CD4-positive, alpha-beta T cell (primary cell): ENCODE measurements at regions of chr22 and their contacts with region 1.

Region 1: GRCh38 chr22:42313804-42314581 is 43.5 kb upstream of the TCF20 start:
- DNase-seq: peak in 12 of 14 experiments; percentile 21 to 76 (median 48)
- ATAC-seq: peak; percentile 88
- H3K4me3 ChIP-seq: no peak overlapping the region
- H3K4me3 Mint-ChIP-seq: peak overlapping the region; percentile 54
- H3K27ac ChIP-seq: no peak overlapping the region
- H3K27ac Mint-ChIP-seq: peak overlapping the region; percentile 72
- H3K4me1 ChIP-seq: peaks cover 68% of the 10 kb centered on the region
- H3K4me1 Mint-ChIP-seq: peaks cover 59% of the 10 kb centered on the region
- H3K27me3 ChIP-seq: no peaks in the 10 kb centered on the region
- H3K27me3 Mint-ChIP-seq: no peaks in the 10 kb centered on the region
- CTCF ChIP-seq: peak; percentile 26

Region 2: DNA sequence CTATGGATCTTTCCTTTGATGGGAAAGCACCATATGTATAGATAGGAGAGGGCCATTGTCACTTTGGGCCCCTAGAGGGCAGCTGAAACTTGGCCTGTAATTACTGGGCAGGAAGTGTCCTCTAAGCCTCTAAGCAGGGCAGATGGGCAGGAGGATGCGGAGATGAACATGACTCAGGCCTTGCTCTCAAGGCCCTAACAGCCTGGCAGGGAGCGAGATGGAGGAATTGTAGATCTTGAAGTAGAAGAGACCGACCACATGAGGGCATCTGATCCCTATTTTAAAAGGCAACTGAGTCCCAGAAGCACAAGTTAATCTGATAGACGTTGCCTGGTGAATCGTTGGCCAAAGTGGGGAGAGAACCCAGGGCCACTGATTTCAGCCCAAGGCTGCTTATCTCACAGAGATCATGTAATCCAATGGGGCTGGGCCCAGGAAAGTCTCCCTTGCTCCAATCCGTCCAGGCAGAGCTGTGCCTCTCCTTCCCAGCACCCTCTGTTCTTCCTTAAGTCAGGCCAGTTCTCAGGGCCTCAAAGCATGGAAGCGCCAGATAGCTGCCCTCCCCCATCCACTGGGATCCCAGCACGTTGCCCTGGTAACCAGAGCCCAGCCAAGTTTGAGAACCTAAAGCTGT is 347.3 kb before region 1 on chr22:
- CTCF ChIA-PET with region 1: no interaction called
- POLR2A ChIA-PET with region 1: no interaction called
- intact Hi-C with region 1: loop called in 1 of 2 experiments (anchors 10 kb)
- DNase-seq: peak in 7 of 14 experiments; percentile 25 to 80 (median 49)
- ATAC-seq: peak; percentile 61
- H3K4me3 ChIP-seq: no peak overlapping the region
- H3K4me3 Mint-ChIP-seq: no peak overlapping the region
- H3K27ac ChIP-seq: no peak overlapping the region
- H3K27ac Mint-ChIP-seq: no peak overlapping the region
- H3K4me1 ChIP-seq: no peaks in the 10 kb centered on the region
- H3K4me1 Mint-ChIP-seq: no peaks in the 10 kb centered on the region
- H3K27me3 ChIP-seq: peaks cover under 1 to 8% of the 10 kb centered on the region in 2 experiments
- H3K27me3 Mint-ChIP-seq: peaks cover 6% of the 10 kb centered on the region
- CTCF ChIP-seq: peak; percentile 43

Region 3: DNA sequence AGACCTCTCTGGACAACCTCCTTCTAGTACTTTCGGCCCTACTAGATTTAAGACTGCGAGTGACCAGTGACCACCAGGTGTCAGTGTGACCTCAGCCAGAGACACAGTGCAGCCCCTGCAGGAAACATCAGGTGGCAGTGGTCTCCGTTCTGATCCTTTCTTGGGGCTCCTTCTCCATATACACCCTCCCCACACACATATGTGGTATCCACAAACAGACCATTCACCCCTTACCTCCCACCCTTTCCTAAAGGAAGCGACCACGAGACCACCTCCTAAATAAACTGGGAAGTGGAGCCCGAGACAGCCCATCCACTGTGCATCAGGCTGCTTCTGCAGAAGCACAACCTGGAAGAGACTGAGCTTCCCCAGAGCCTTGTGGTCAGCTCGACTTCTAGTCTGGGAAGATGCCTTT is 144.9 kb before region 1 on chr22:
- CTCF ChIA-PET with region 1: interaction called, 4 read pairs
- POLR2A ChIA-PET with region 1: no interaction called
- intact Hi-C with region 1: loop called (anchors 1 to 5 kb)
- DNase-seq: peak; percentile 57 to 86 (median 72)
- ATAC-seq: peak; percentile 93
- H3K4me3 ChIP-seq: no peak overlapping the region
- H3K4me3 Mint-ChIP-seq: no peak overlapping the region
- H3K27ac ChIP-seq: no peak overlapping the region
- H3K27ac Mint-ChIP-seq: no peak overlapping the region
- H3K4me1 ChIP-seq: peaks cover 13% of the 10 kb centered on the region
- H3K4me1 Mint-ChIP-seq: peaks cover 34% of the 10 kb centered on the region
- H3K27me3 ChIP-seq: no peaks in the 10 kb centered on the region
- H3K27me3 Mint-ChIP-seq: no peaks in the 10 kb centered on the region
- CTCF ChIP-seq: peak; percentile 71

Region 4: DNA sequence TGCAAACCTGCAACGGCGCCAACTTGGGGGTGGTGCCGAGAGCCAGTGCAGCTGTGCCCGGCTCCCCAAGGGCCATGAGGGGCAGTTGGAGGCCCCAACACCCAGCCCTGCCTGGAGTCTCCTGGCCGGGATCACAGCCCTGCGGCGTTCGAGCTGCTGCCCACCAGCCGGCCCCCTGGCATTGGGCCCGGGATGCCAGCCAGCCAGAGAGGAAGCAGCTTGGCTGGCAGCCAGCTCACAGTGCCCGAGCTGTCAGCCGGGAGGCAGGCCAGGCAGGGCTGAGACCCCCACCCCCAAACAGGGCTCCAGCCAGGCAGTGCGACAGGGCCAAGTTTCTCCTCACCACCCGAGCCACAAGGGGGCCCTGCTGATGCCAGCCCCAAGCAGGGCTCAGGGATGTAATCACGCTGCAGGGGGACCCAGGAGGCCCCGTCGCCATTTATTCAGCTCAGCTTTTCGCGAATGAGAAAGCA is 17.6 kb before region 1 on chr22:
- CTCF ChIA-PET with region 1: no interaction called
- POLR2A ChIA-PET with region 1: interaction called, 10 read pairs
- intact Hi-C with region 1: no loop called
- DNase-seq: peak in 7 of 14 experiments; percentile 10 to 55 (median 18)
- ATAC-seq: no peak
- H3K4me3 ChIP-seq: no peak overlapping the region
- H3K4me3 Mint-ChIP-seq: no peak overlapping the region
- H3K27ac ChIP-seq: peak overlapping the region; percentile 15 to 30
- H3K27ac Mint-ChIP-seq: peak overlapping the region; percentile 90
- H3K4me1 ChIP-seq: peaks cover 83% of the 10 kb centered on the region
- H3K4me1 Mint-ChIP-seq: peaks cover 85% of the 10 kb centered on the region
- H3K27me3 ChIP-seq: no peaks in the 10 kb centered on the region
- H3K27me3 Mint-ChIP-seq: no peaks in the 10 kb centered on the region
- CTCF ChIP-seq: peak; percentile 18